Activated CD4-positive, alpha-beta T cell treated with anti-CD3 and anti-CD28 coated beads for 36 hours (primary cell): ENCODE measurements at regions of chr14 and their contacts with region 1.

Region 1: DNA sequence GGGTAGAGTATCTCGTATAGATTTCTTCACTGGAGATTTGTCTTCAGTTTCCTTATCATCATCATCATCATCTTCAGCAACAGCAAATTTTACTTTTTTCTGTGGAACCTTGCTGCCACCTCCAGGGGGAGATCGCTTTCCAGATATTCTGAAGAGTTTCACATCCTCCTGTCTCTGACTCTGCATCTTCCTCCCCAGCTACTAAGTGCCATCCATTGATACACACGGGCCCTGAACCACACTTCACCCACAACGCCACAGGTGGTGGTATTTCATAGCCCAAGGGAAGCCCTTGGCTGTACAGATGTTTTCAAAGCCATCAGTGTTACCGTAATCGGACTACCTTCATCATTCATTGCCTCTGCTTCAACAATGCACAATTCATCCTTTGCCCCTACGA is 82.2 kb downstream of the PPP2R5C start:
- DNase-seq: peak; percentile 78
- ATAC-seq: peak; percentile 66
- H3K4me3 Mint-ChIP-seq: no peak overlapping the region
- H3K27ac Mint-ChIP-seq: peak overlapping the region; percentile 82
- H3K4me1 Mint-ChIP-seq: peaks cover 87% of the 10 kb centered on the region
- H3K27me3 Mint-ChIP-seq: no peaks in the 10 kb centered on the region

Region 2: DNA sequence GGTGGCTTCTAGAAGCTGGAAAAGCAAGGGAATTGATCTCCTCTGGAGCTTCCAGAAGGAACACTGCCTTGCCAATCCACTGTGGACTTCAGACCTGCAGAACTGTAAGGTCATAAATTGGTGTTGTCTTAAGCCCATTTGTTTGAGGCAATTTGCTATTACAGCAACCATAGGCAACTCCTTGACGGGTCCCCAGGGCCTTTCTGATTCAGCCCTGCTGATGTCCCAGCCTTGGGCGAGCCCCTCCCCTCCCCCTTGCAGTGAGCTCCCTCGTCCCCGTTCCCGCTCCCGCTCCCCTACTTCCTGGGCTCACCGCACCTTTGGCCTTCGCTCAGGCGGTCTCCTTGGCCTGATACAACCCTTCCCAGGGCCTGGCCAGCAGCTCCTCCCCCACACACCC is 301.3 kb before region 1 on chr14:
- CTCF ChIA-PET with region 1: no interaction called
- POLR2A ChIA-PET with region 1: no interaction called
- intact Hi-C with region 1: no loop called
- DNase-seq: no peak
- ATAC-seq: no peak
- H3K4me3 Mint-ChIP-seq: no peak overlapping the region
- H3K27ac Mint-ChIP-seq: no peak overlapping the region
- H3K4me1 Mint-ChIP-seq: no peaks in the 10 kb centered on the region
- H3K27me3 Mint-ChIP-seq: peaks cover 2% of the 10 kb centered on the region

Region 3: GRCh38 chr14:101628471-101628966 is 215.1 kb before region 1 on chr14:
- CTCF ChIA-PET with region 1: no interaction called
- POLR2A ChIA-PET with region 1: no interaction called
- intact Hi-C with region 1: no loop called
- DNase-seq: peak; percentile 87
- ATAC-seq: peak; percentile 94
- H3K4me3 Mint-ChIP-seq: no peak overlapping the region
- H3K27ac Mint-ChIP-seq: no peak overlapping the region
- H3K4me1 Mint-ChIP-seq: no peaks in the 10 kb centered on the region
- H3K27me3 Mint-ChIP-seq: peaks cover 2% of the 10 kb centered on the region

Region 4: GRCh38 chr14:101774006-101774795 is 69.5 kb before region 1 on chr14:
- CTCF ChIA-PET with region 1: interaction called, 41 read pairs
- POLR2A ChIA-PET with region 1: no interaction called
- intact Hi-C with region 1: loop called (anchors 1 to 2 kb)
- DNase-seq: no peak
- ATAC-seq: no peak
- H3K4me3 Mint-ChIP-seq: no peak overlapping the region
- H3K27ac Mint-ChIP-seq: no peak overlapping the region
- H3K4me1 Mint-ChIP-seq: peaks cover 14% of the 10 kb centered on the region
- H3K27me3 Mint-ChIP-seq: peaks cover 1% of the 10 kb centered on the region